PC-3 (cell line): ENCODE measurements at regions of chr22 and their contacts with region 1.

Region 1: GRCh38 chr22:36977947-36978660 is 41.1 kb downstream of the TST start:
- DNase-seq: peak; percentile 78
- ATAC-seq: peak; percentile 91
- H3K4me3 ChIP-seq: peak overlapping the region; percentile 72
- H3K27ac ChIP-seq: no peak overlapping the region
- H3K4me1 ChIP-seq: no peaks in the 10 kb centered on the region
- H3K27me3 ChIP-seq: no peaks in the 10 kb centered on the region
- CTCF ChIP-seq: peak; percentile 82

Region 2: GRCh38 chr22:36775964-36776669 is 202.0 kb before region 1 on chr22 and contains the start of gene IFT27:
- CTCF ChIA-PET with region 1: interaction called, 11 read pairs
- POLR2A ChIA-PET with region 1: interaction called, 3 read pairs
- intact Hi-C with region 1: loop called (anchors 5 kb)
- DNase-seq: peak; percentile 98
- ATAC-seq: peak; percentile 94
- H3K4me3 ChIP-seq: peak within 1 kb of the TSS; percentile 88
- H3K27ac ChIP-seq: no peak within 1 kb of the TSS
- H3K4me1 ChIP-seq: peaks cover 13% of the 10 kb centered on the region; the same call in 1 of the 2 replicates
- H3K27me3 ChIP-seq: no peaks in the 10 kb centered on the region
- CTCF ChIP-seq: no peak
- total RNA-seq, gene IFT27: 19.9 and 23.3 TPM in 2 replicates

Region 3: DNA sequence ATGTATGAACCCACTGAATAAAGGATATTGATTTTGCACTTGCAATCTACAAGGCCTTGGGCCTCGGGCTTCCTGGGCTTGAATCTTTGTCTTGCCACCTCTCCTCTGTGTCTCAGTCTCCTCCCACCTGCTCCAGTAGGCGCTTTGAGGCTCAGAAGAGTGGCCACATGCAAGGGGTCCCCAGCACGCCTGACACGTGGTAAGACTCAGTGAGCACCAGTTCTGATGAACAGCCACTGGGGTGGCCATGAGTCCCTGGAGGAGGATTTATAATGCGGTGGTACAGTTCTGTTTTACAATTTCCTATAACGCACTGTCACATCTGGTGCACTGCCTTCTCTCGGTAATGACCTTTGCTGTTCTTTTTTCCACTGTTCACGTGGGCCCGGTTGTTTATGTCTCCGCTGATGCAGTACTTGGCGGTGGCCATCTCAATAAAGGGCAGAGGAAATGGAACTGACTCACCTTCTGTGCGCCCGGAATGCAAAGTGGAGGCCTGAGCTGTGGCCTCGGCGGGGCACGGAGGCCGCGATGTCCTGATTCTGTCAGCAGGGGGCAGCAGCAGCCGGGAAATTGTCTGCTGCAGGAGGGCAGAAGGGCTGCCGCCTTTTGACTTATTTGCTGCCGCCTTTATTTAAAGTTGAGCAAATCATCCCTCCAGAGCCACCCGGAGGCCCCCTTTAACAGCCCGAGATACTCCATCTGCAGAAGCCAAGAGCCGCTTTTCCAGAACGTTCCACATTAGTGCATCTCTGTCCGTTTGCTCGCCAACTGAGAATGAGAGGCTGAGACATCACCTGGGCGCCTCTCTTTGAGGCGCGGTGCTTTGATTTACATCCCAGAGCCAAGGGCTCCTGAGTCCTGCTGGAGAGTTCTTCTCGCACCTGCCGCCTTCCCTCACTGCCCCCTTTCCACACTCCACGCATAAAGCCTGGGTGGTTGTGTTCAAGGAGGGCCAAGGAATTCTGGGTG is 196.2 kb before region 1 on chr22:
- CTCF ChIA-PET with region 1: no interaction called
- POLR2A ChIA-PET with region 1: no interaction called
- intact Hi-C with region 1: loop called (anchors 5 kb)
- DNase-seq: peak; percentile 84
- ATAC-seq: peak; percentile 98
- H3K4me3 ChIP-seq: no peak overlapping the region
- H3K27ac ChIP-seq: no peak overlapping the region
- H3K4me1 ChIP-seq: peaks cover 6% of the 10 kb centered on the region
- H3K27me3 ChIP-seq: 0 out of 2 replicates have a peak, but pooled peaks cover 5% of the 10 kb centered on the region
- CTCF ChIP-seq: peak; percentile 84

Region 4: DNA sequence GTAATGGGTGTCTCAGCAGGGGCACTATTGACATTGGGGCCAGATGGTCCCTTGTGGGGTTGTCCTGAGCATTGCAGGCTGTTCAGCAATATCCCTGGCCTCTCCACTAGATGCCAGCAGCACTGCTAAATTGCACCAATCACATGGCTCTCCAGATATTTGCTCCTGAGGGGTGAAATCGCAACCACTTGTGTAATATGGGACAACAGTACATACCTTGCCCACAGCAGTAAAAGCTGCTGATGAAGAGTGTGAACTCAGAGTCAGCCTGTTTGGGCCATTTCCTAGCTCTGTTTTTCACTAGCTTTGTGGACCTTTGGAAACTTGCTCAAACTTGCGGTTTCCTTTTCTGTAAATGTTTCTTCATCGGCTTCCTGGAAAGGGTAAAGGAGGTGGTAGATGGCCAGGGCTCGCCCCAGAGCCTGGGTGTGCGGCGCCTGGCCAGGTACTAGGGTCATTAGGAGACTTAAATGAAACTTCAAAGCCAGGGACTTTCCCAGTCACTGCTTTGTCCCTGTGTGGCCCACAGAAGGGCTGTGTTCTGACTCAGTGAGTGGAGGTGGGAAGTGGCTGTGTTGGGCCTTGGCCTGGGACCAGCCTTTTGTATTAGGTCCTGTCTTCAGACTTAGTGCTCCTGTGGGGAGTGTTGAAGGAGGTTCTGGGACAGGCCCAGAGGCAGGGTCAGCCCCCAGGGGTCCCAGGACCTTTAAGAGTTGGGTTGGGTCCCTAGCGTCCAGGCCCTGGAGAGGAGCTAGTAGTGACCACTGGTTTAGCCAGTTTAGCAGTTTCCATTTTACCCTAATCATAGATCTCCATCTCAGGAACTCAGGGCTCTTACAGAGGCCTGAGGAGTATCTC is 104.2 kb before region 1 on chr22:
- CTCF ChIA-PET with region 1: no interaction called
- POLR2A ChIA-PET with region 1: no interaction called
- intact Hi-C with region 1: loop called (anchors 1 kb)
- DNase-seq: peak; percentile 55
- ATAC-seq: peak; percentile 61
- H3K4me3 ChIP-seq: no peak overlapping the region
- H3K27ac ChIP-seq: 0 out of 2 replicates have a peak overlapping the region, but pooled peaks have one; percentile 25
- H3K4me1 ChIP-seq: peaks cover 31% of the 10 kb centered on the region
- H3K27me3 ChIP-seq: peaks cover 7% of the 10 kb centered on the region; the same call in 1 of the 2 replicates
- CTCF ChIP-seq: peak; percentile 53; the same call in 1 of the 2 replicates

Region 5: GRCh38 chr22:37077884-37078485 is 99.9 kb after region 1 on chr22:
- CTCF ChIA-PET with region 1: no interaction called
- POLR2A ChIA-PET with region 1: no interaction called
- intact Hi-C with region 1: no loop called
- DNase-seq: peak; percentile 58
- ATAC-seq: peak; percentile 50; the same call in 1 of the 2 replicates
- H3K4me3 ChIP-seq: no peak overlapping the region
- H3K27ac ChIP-seq: no peak overlapping the region
- H3K4me1 ChIP-seq: no peaks in the 10 kb centered on the region
- H3K27me3 ChIP-seq: 0 out of 2 replicates have a peak, but pooled peaks cover 8% of the 10 kb centered on the region
- CTCF ChIP-seq: peak; percentile 87